Heart right ventricle (tissue), 16 donors: ENCODE measurements at regions of chr1 and their contacts with region 1.

Region 1: GRCh38 chr1:179558078-179558477 is 17.7 kb downstream of the NPHS2 start:
- DNase-seq: no peak
- ATAC-seq: no peak
- H3K4me3 ChIP-seq: no peak overlapping the region
- H3K27ac ChIP-seq: no peak overlapping the region
- H3K4me1 ChIP-seq: no peaks in the 10 kb centered on the region
- H3K27me3 ChIP-seq: peaks cover 0 to 11% (median 0%) of the 10 kb centered on the region in 7 donors
- CTCF ChIP-seq: no peak

Region 2: DNA sequence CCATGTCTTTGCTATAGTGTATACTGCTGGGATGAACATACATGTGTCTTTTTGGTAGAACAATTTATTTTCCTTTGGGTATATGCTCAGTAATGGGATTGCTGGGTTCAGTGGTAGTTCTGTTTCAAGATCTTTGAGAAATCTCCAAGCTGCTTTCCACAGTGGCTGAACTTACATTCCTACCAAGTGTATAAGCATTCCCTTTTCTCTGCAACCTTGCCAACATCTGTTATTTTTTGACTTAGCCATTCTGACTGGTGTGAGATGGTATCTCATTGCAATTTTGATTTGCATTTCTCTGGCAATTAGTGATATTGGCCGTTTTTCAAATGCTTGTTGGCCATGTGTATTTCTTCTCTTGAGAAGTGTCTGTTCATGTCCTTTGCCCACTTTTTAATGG is 649.7 kb before region 1 on chr1:
- intact Hi-C with region 1: no loop called
- DNase-seq: no peak
- ATAC-seq: no peak
- H3K4me3 ChIP-seq: no peak overlapping the region
- H3K27ac ChIP-seq: no peak overlapping the region
- H3K4me1 ChIP-seq: no peaks in the 10 kb centered on the region
- H3K27me3 ChIP-seq: no peaks in the 10 kb centered on the region
- CTCF ChIP-seq: no peak

Region 3: GRCh38 chr1:179474713-179475112 is 83.4 kb before region 1 on chr1:
- intact Hi-C with region 1: loop called in 1 of 10 experiments (anchors 10 kb)
- DNase-seq: no peak
- ATAC-seq: no peak
- H3K4me3 ChIP-seq: no peak overlapping the region
- H3K27ac ChIP-seq: no peak overlapping the region
- H3K4me1 ChIP-seq: no peaks in the 10 kb centered on the region
- H3K27me3 ChIP-seq: no peaks in the 10 kb centered on the region
- CTCF ChIP-seq: no peak

Region 4: DNA sequence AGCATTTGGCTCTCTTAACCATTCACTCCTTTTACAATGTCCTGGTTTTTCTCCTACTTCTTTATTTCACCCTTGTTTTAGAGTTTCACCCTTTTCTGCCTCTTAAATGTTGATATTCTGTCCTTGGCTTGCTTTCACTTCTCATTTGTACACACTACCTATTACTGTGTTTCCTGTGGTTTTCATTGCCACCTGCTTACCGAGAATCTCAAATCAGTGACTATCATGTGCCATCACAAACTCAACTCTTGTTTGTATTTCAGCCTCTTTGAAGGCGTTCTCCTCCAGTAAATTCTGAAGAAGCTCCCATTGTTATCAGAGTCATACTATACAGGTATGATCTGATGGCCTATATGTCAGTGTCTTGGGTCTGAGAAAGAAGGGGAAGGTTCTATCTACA is 48.0 kb before region 1 on chr1:
- intact Hi-C with region 1: no loop called
- DNase-seq: no peak
- ATAC-seq: no peak
- H3K4me3 ChIP-seq: no peak overlapping the region
- H3K27ac ChIP-seq: no peak overlapping the region
- H3K4me1 ChIP-seq: no peaks in the 10 kb centered on the region
- H3K27me3 ChIP-seq: no peaks in the 10 kb centered on the region
- CTCF ChIP-seq: no peak

Region 5: GRCh38 chr1:179742717-179743678 is 184.9 kb after region 1 on chr1 and contains the start of gene FAM163A:
- intact Hi-C with region 1: no loop called
- DNase-seq: peak in 1 of 2 donors; percentile 14
- ATAC-seq: peak in 7 of 8 donors; percentile 36 to 63 (median 43)
- H3K4me3 ChIP-seq: peak within 1 kb of the TSS; percentile 19 to 52 (median 46)
- H3K27ac ChIP-seq: no peak within 1 kb of the TSS
- H3K4me1 ChIP-seq: peaks cover 7 to 25% (median 20%) of the 10 kb centered on the region in 9 donors
- H3K27me3 ChIP-seq: peaks cover 23 to 92% (median 66%) of the 10 kb centered on the region in 7 donors
- CTCF ChIP-seq: no peak
- total RNA-seq, gene FAM163A: 0.07 to 0.30 (median 0.14) TPM in 6 of 10 donors, not detected in the others